Right cardiac atrium (tissue), 5 donors: ENCODE measurements at regions of chr17 and their contacts with region 1.

Region 1: GRCh38 chr17:39080421-39081078 is 70.9 kb downstream of the PLXDC1 start:
- DNase-seq: peak; percentile 54 to 85 (median 80)
- ATAC-seq: peak; percentile 35 to 44
- H3K4me3 ChIP-seq: no peak overlapping the region
- H3K27ac ChIP-seq: no peak overlapping the region
- H3K4me1 ChIP-seq: peaks cover 7% of the 10 kb centered on the region
- H3K27me3 ChIP-seq: no peaks in the 10 kb centered on the region

Region 2: DNA sequence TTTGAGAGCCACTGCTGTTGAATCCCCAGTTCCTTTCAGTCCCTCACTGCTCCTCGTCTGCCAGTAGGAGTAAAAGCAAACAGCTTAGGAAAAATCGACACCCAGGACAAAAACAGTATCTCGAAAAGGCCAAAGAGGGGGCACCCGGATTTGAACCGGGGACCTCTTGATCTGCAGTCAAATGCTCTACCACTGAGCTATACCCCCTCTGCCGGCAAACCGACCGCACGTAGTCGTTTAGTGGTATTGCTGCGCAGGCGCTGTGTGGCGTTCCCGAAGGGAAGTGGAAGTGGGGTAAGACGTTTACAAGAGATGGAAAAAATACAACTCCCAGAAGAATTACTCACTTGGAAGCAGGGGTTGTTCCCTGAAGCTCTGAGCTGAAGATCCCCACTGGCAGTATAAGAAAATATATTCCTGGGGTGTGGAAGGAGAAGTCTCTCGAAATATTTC is 73.1 kb after region 1 on chr17:
- intact Hi-C with region 1: loop called in 1 of 4 experiments (anchors 5 kb)
- DNase-seq: peak; percentile 85 to 97 (median 94)
- ATAC-seq: peak; percentile 87 to 89
- H3K4me3 ChIP-seq: peak overlapping the region; percentile 89
- H3K27ac ChIP-seq: peak overlapping the region; percentile 77
- H3K4me1 ChIP-seq: peaks cover 5% of the 10 kb centered on the region
- H3K27me3 ChIP-seq: no peaks in the 10 kb centered on the region

Region 3: GRCh38 chr17:39294060-39294459 is 213.5 kb after region 1 on chr17:
- intact Hi-C with region 1: no loop called
- DNase-seq: no peak
- ATAC-seq: no peak
- H3K4me3 ChIP-seq: no peak overlapping the region
- H3K27ac ChIP-seq: no peak overlapping the region
- H3K4me1 ChIP-seq: no peaks in the 10 kb centered on the region
- H3K27me3 ChIP-seq: no peaks in the 10 kb centered on the region